ENCODE measurements at regions of chr6 and their contacts with region 1.

Region 1: GRCh38 chr6:134063966-134064445 is 11.6 kb upstream of the SLC2A12 start:
- DNase-seq: peak; percentile 63 to 70 (median 66)
- ATAC-seq: peak; percentile 81
- H3K4me3 ChIP-seq: no peak overlapping the region
- H3K27ac ChIP-seq: no peak overlapping the region
- H3K4me1 ChIP-seq: peaks cover 2% of the 10 kb centered on the region
- H3K27me3 ChIP-seq: no peaks in the 10 kb centered on the region
- CTCF ChIP-seq: peak; percentile 65 to 94 (median 81)
- POLR2A ChIP-seq: no peak

Region 2: DNA sequence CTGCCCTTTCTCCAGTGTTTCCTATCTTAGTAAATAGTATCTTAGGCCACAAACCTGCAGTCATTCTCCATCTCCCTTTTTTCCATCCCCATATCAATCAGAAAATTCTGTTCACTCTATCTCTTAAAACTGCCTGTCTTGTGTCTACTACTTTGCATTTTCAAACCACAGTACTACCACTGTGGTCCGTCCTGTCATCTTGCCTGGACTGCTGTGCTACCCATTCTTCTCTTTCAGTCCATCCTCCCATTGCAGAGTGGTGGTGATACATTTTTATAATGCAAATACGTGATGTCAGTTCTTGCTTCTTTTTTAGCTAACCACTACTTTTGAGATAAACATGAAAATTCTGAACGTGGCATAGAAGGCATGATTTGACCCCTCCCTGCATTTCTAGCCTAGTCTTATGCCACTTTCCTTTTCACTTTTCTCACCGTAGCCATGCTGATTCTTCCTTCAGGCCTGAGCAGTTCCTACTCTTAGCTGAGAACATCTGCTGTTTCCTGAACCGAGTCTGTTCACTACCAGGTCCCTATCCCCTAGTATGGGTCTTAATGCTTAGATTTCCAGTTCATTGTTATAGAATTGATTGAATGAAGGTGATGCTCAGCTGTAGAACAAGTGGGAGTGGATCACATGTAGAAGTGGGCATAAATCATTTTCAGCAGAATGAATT is 97.2 kb before region 1 on chr6:
- intact Hi-C with region 1: loop called (anchors 10 kb)
- DNase-seq: no peak
- ATAC-seq: no peak
- H3K4me3 ChIP-seq: no peak overlapping the region
- H3K27ac ChIP-seq: no peak overlapping the region
- H3K4me1 ChIP-seq: peaks cover 2% of the 10 kb centered on the region
- H3K27me3 ChIP-seq: no peaks in the 10 kb centered on the region
- CTCF ChIP-seq: no peak
- POLR2A ChIP-seq: no peak

Measured in body of pancreas (tissue), 4 donors.